Sigmoid colon (tissue), 7 donors: ENCODE measurements at regions of chr7 and their contacts with region 1.

Region 1: GRCh38 chr7:128455551-128456254 is at the start of gene HILPDA:
- DNase-seq: peak; percentile 97
- H3K4me3 ChIP-seq: peak within 1 kb of the TSS; percentile 64 to 92 (median 83)
- H3K27ac ChIP-seq: peak within 1 kb of the TSS; percentile 87 to 94 (median 91)
- H3K4me1 ChIP-seq: peaks cover 0 to 45% (median 39%) of the 10 kb centered on the region in 4 donors
- H3K27me3 ChIP-seq: no peaks in the 10 kb centered on the region
- CTCF ChIP-seq: no peak
- EP300 ChIP-seq: peak in 3 of 4 donors; percentile 7 to 80 (median 13)
- POLR2A ChIP-seq: peak; percentile 59 to 73
- total RNA-seq, gene HILPDA: 10.2 to 12.8 (median 11.3) TPM

Region 2: GRCh38 chr7:128398016-128398840 is 57.5 kb before region 1 on chr7:
- intact Hi-C with region 1: loop called (anchors 2 kb)
- DNase-seq: peak; percentile 80
- H3K4me3 ChIP-seq: no peak overlapping the region
- H3K27ac ChIP-seq: no peak overlapping the region
- H3K4me1 ChIP-seq: no peaks in the 10 kb centered on the region
- H3K27me3 ChIP-seq: no peaks in the 10 kb centered on the region
- CTCF ChIP-seq: peak; percentile 83 to 98 (median 91)
- EP300 ChIP-seq: no peak
- POLR2A ChIP-seq: no peak

Region 3: GRCh38 chr7:128409596-128410160 is 46.0 kb before region 1 on chr7 and contains the start of gene IMPDH1:
- intact Hi-C with region 1: loop called (anchors 2 kb)
- DNase-seq: peak; percentile 96
- H3K4me3 ChIP-seq: peak within 1 kb of the TSS; percentile 57 to 73 (median 64)
- H3K27ac ChIP-seq: peak within 1 kb of the TSS; percentile 91 to 94 (median 94)
- H3K4me1 ChIP-seq: peaks cover 0 to 48% (median 39%) of the 10 kb centered on the region in 4 donors
- H3K27me3 ChIP-seq: no peaks in the 10 kb centered on the region
- CTCF ChIP-seq: no peak
- EP300 ChIP-seq: no peak
- POLR2A ChIP-seq: peak in 1 of 2 donors; percentile 52
- total RNA-seq, gene IMPDH1: 23.5 to 36.3 (median 28.7) TPM

Region 4: GRCh38 chr7:128425850-128426249 is 29.9 kb before region 1 on chr7:
- intact Hi-C with region 1: loop called (anchors 1 kb)
- DNase-seq: peak; percentile 82
- H3K4me3 ChIP-seq: no peak overlapping the region
- H3K27ac ChIP-seq: peak overlapping the region in 1 of 4 donors; percentile 60
- H3K4me1 ChIP-seq: peaks cover 0 to 25% (median 9%) of the 10 kb centered on the region in 4 donors
- H3K27me3 ChIP-seq: no peaks in the 10 kb centered on the region
- CTCF ChIP-seq: peak; percentile 70 to 91 (median 81)
- EP300 ChIP-seq: no peak
- POLR2A ChIP-seq: no peak